ENCODE measurements at regions of chr17 and their contacts with region 1.

Region 1: DNA sequence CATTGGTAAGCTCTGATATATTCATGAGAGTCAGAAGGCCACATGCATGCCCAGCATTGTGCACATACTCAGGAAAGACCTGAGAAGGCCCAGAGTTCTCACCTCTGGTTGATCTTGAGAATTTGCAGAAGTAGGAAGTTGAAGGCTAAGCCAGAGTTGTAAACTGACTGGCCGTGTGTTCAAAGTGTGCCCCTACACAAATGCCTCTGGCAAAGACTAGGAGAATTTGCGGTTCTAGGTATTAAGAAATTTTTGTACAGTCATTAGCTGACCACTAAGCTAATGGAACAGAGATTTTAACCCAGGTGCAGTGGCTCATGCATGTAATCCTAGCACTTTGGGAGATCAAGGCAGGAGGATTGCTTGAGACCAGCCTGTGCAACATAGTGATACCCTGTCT is 25.0 kb downstream of the FBXL20 start:
- DNase-seq: no peak
- ATAC-seq: no peak
- H3K4me3 Mint-ChIP-seq: no peak overlapping the region
- H3K27ac Mint-ChIP-seq: peak overlapping the region; percentile 44
- H3K4me1 Mint-ChIP-seq: peaks cover 28% of the 10 kb centered on the region
- H3K27me3 Mint-ChIP-seq: no peaks in the 10 kb centered on the region

Region 2: DNA sequence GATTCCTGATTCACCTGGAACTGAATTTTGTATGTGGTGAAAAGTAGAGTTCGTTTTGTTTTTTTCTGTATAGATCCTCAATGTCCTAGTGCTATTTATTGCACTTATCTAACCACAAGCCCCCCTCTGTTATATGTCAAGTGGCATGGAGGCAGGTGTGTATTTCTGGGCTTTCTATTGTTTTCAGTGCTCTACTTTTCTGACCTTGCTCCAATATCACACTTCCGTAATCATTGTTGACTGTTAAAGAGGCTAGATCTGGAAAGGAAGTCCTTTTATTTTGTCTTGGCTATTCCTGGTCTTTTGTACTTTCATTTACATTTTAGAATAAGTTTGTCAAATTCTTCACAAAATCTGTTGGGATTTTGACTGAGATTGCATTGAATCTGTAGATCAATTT is 382.4 kb before region 1 on chr17:
- CTCF ChIA-PET with region 1: no interaction called
- POLR2A ChIA-PET with region 1: no interaction called
- intact Hi-C with region 1: no loop called
- DNase-seq: no peak
- ATAC-seq: no peak
- H3K4me3 Mint-ChIP-seq: no peak overlapping the region
- H3K27ac Mint-ChIP-seq: no peak overlapping the region
- H3K4me1 Mint-ChIP-seq: no peaks in the 10 kb centered on the region
- H3K27me3 Mint-ChIP-seq: no peaks in the 10 kb centered on the region

Region 3: DNA sequence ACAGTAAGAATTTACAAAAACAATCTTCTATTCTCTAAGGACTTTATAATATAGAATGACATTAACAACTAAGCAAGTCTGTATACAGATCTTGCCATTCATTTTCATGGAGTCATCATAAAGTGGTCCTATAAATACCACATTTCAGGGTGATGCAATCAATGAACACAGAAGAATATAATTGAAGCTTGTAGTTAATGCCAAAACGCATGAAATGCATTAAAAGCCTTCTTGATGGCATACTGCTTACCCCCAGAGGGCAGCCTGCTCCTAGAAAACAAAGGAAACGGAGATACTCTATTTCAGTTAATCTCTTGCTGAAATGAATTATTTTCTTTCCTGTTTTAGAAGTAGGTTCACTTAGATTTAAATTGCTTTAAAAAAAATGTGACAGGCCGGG is 105.5 kb before region 1 on chr17:
- CTCF ChIA-PET with region 1: no interaction called
- POLR2A ChIA-PET with region 1: no interaction called
- intact Hi-C with region 1: loop called in 1 of 2 experiments (anchors 5 kb)
- DNase-seq: peak; percentile 26
- ATAC-seq: no peak
- H3K4me3 Mint-ChIP-seq: no peak overlapping the region
- H3K27ac Mint-ChIP-seq: no peak overlapping the region
- H3K4me1 Mint-ChIP-seq: no peaks in the 10 kb centered on the region
- H3K27me3 Mint-ChIP-seq: no peaks in the 10 kb centered on the region

Region 4: GRCh38 chr17:39325528-39326240 is 50.8 kb before region 1 on chr17:
- CTCF ChIA-PET with region 1: no interaction called
- POLR2A ChIA-PET with region 1: no interaction called
- intact Hi-C with region 1: loop called (anchors 5 to 10 kb)
- DNase-seq: no peak
- ATAC-seq: no peak
- H3K4me3 Mint-ChIP-seq: no peak overlapping the region
- H3K27ac Mint-ChIP-seq: no peak overlapping the region
- H3K4me1 Mint-ChIP-seq: peaks cover 4% of the 10 kb centered on the region
- H3K27me3 Mint-ChIP-seq: no peaks in the 10 kb centered on the region

Measured in activated CD4-positive, alpha-beta T cell treated with anti-CD3 and anti-CD28 coated beads for 36 hours (primary cell).